HepG2 (cell line): ENCODE measurements at regions of chr5 and their contacts with region 1.

Region 1: GRCh38 chr5:34459908-34460307 is 196.2 kb upstream of the RAI14 start:
- DNase-seq: no peak
- ATAC-seq: no peak
- H3K4me3 ChIP-seq: no peak overlapping the region
- H3K27ac ChIP-seq: no peak overlapping the region
- H3K4me1 ChIP-seq: no peaks in the 10 kb centered on the region
- H3K27me3 ChIP-seq: no peaks in the 10 kb centered on the region
- CTCF ChIP-seq: no peak
- EP300 ChIP-seq: no peak
- POLR2A ChIP-seq: no peak
- RAD21 ChIP-seq: no peak

Region 2: GRCh38 chr5:33997331-33997983 is 462.5 kb before region 1 on chr5:
- CTCF ChIA-PET with region 1: no interaction called
- POLR2A ChIA-PET with region 1: no interaction called
- in situ Hi-C with region 1: loop called (anchors 25 kb)
- intact Hi-C with region 1: loop called (anchors 10 kb)
- DNase-seq: peak; percentile 52
- ATAC-seq: peak; percentile 71
- H3K4me3 ChIP-seq: no peak overlapping the region
- H3K27ac ChIP-seq: no peak overlapping the region
- H3K4me1 ChIP-seq: peaks cover 45% of the 10 kb centered on the region
- H3K27me3 ChIP-seq: no peaks in the 10 kb centered on the region
- CTCF ChIP-seq: peak; percentile 71
- EP300 ChIP-seq: no peak
- POLR2A ChIP-seq: no peak
- RAD21 ChIP-seq: peak; percentile 64; the same call in 1 of the 2 replicates

Region 3: DNA sequence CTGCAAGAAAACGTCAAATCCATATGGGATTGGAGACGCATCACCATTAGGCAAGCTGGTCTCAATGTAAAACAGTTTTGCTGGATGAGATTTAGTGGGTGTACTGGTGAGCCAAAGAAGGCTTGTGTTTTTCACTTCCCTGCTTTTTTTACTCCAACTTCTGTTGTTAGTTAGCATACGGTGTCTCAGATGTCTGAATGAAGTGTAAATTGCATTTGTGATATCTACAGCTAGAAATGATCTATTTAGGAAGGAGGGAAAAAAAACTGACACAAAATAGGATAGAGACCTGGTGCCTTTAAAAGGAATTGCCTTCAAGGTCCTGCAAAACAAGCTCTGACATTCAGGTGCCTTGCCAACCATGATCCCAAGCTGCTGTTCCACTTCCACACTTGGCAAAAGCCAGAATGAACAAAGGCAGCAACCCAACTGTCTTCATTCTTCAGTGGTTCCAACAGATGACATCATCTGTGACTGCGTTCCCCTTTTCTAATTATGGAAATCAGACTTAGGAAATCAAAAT is 92.1 kb after region 1 on chr5:
- CTCF ChIA-PET with region 1: no interaction called
- POLR2A ChIA-PET with region 1: no interaction called
- in situ Hi-C with region 1: no loop called
- intact Hi-C with region 1: no loop called
- DNase-seq: no peak
- ATAC-seq: no peak
- H3K4me3 ChIP-seq: no peak overlapping the region
- H3K27ac ChIP-seq: no peak overlapping the region
- H3K4me1 ChIP-seq: peaks cover 31% of the 10 kb centered on the region
- H3K27me3 ChIP-seq: no peaks in the 10 kb centered on the region; a peak in 1 of 5 replicates
- CTCF ChIP-seq: no peak
- EP300 ChIP-seq: no peak
- POLR2A ChIP-seq: no peak
- RAD21 ChIP-seq: no peak